ENCODE measurements at regions of chr19 and their contacts with region 1.

Region 1: GRCh38 chr19:9768175-9769112 is at the start of gene ZNF846:
- DNase-seq: peak; percentile 97 to 98
- ATAC-seq: peak; percentile 98
- H3K4me3 ChIP-seq: peak within 1 kb of the TSS; percentile 63 to 94
- H3K27ac ChIP-seq: peak within 1 kb of the TSS; percentile 74 to 90
- H3K4me1 ChIP-seq: no peaks in the 10 kb centered on the region
- H3K27me3 ChIP-seq: no peaks in the 10 kb centered on the region
- total RNA-seq, gene ZNF846: 17.4 to 33.0 TPM

Region 2: DNA sequence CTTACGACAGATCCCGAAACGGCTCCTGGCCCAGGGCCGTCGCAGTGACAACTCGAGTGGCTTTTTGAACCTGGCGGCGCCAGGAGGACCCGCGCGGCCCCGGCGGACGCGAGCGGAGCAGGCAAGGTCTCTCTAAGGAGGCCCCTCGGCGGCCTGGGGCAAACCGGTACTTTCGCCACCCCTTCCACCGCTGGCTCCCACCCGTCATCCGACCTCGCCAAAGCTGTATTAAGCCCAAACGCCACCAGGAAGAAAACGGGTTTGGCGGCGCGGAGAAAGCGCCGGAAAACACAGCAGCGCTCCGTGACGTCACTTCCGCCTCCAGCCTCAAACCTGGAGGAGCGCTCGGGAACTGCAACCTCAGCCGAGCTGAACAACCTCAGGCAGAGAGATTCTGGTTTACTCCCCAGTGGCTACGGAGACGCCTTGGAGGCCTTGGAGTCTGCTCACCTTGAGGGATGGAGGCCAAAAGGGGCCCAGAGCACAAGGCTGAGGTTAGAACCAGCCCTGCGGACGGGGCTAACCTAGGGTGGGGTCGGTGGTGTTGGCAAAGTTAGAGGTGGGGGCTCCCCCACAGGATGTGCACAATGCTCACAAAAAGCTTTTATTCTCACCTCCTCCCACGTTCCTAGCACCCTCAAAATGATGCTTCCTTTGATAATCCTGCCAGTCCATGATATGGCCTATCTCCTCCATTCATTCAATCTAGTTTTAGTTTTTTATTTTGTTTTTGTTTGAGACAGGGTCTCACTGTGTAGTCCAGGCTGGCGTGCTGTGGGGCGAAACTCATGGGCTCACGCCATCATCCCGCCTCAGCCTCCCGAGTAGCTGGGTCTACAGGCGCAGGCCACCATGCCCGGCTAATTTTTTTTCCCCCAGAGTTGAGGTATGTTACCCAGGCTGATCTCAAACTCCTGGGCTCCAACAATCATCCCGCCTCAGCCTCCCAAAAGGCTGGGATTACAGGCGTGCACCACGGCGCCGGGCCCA is 332.9 kb before region 1 on chr19 and contains the start of gene ZNF266:
- intact Hi-C with region 1: loop called in 1 of 2 experiments (anchors 5 kb)
- DNase-seq: peak; percentile 93 to 96
- ATAC-seq: peak; percentile 94
- H3K4me3 ChIP-seq: peak within 1 kb of the TSS; percentile 43 to 99
- H3K27ac ChIP-seq: peak within 1 kb of the TSS in 1 of 2 donors; percentile 49
- H3K4me1 ChIP-seq: no peaks in the 10 kb centered on the region
- H3K27me3 ChIP-seq: no peaks in the 10 kb centered on the region
- total RNA-seq, gene ZNF266: 28.2 to 35.1 TPM

Region 3: GRCh38 chr19:9674663-9675357 is 93.6 kb before region 1 on chr19 and contains the start of gene ZNF562:
- intact Hi-C with region 1: loop called (anchors 5 to 10 kb)
- DNase-seq: peak; percentile 94 to 96
- ATAC-seq: peak; percentile 97
- H3K4me3 ChIP-seq: peak within 1 kb of the TSS; percentile 58 to 65
- H3K27ac ChIP-seq: peak within 1 kb of the TSS; percentile 11 to 72
- H3K4me1 ChIP-seq: peaks cover 0 to 2% of the 10 kb centered on the region in 2 donors
- H3K27me3 ChIP-seq: no peaks in the 10 kb centered on the region
- total RNA-seq, gene ZNF562: 33.6 to 35.9 TPM

Region 4: GRCh38 chr19:9709305-9709704 is 59.1 kb before region 1 on chr19:
- intact Hi-C with region 1: no loop called
- DNase-seq: no peak
- ATAC-seq: no peak
- H3K4me3 ChIP-seq: no peak overlapping the region
- H3K27ac ChIP-seq: no peak overlapping the region
- H3K4me1 ChIP-seq: no peaks in the 10 kb centered on the region
- H3K27me3 ChIP-seq: no peaks in the 10 kb centered on the region

Region 5: GRCh38 chr19:9785367-9786331 is 17.2 kb after region 1 on chr19:
- intact Hi-C with region 1: loop called (anchors 2 kb)
- DNase-seq: peak; percentile 99
- ATAC-seq: peak; percentile 96
- H3K4me3 ChIP-seq: peak overlapping the region; percentile 67
- H3K27ac ChIP-seq: peak overlapping the region in 1 of 2 donors; percentile 97
- H3K4me1 ChIP-seq: no peaks in the 10 kb centered on the region
- H3K27me3 ChIP-seq: no peaks in the 10 kb centered on the region

Measured in aorta (tissue), 5 donors.